CD8-positive, alpha-beta T cell (primary cell): ENCODE measurements at regions of chr15 and their contacts with region 1.

Region 1: DNA sequence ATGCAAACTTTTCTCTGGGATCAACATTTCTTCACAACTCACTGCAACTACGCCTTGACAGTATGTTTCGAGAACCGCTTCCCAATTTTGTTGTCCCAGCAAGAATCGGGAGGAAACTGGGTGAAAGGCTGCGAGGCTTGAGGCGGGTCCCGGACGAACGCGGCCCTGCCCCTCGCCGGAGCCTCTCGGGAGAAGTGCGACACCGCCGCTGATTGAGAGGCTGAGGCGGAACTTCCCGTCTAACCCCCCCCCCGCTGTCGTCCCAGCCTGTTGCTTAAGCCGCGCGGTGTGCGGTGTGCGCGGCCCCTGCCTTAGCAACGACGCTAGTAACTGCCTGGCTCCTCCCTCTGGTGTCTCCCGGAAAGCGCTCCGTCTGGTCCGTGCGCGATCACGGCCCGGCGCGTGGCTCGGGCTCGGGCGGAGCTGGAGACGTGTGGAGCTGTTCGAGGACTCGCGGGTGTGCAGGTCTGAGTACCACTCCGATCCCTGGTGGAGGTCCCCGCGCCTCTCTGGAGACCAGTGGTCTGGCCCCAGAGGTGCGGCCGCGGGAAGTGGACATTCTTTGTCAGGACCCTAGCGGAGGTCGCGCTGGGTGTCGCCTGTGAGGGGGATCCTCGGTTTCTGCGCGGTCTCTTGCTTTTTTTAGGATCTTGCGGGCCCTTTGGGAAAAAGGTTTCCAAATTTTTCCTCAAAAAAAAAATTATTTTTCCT is at the starts of genes DTWD1 and FAM227B:
- DNase-seq: peak; percentile 85 to 98 (median 93)
- ATAC-seq: peak; percentile 97
- H3K4me3 ChIP-seq: peak within 1 kb of the TSS; percentile 71 to 83
- H3K4me3 Mint-ChIP-seq: peak within 1 kb of the TSS; percentile 94
- H3K27ac ChIP-seq: peak within 1 kb of the TSS; percentile 86 to 89
- H3K27ac Mint-ChIP-seq: peak within 1 kb of the TSS; percentile 99
- H3K4me1 ChIP-seq: peaks cover 28% of the 10 kb centered on the region
- H3K4me1 Mint-ChIP-seq: peaks cover 54% of the 10 kb centered on the region
- H3K27me3 ChIP-seq: no peaks in the 10 kb centered on the region
- H3K27me3 Mint-ChIP-seq: no peaks in the 10 kb centered on the region
- CTCF ChIP-seq: no peak
- total RNA-seq, gene DTWD1: 8.7 to 9.7 TPM
- total RNA-seq, gene FAM227B: 3.3 to 4.3 TPM

Region 2: GRCh38 chr15:48330855-48331795 is 1289.7 kb before region 1 on chr15 and contains the start of gene DUT:
- CTCF ChIA-PET with region 1: no interaction called
- POLR2A ChIA-PET with region 1: no interaction called
- intact Hi-C with region 1: loop called (anchors 2 to 5 kb)
- DNase-seq: peak; percentile 64 to 89 (median 79)
- ATAC-seq: peak; percentile 83
- H3K4me3 ChIP-seq: peak within 1 kb of the TSS; percentile 65 to 74
- H3K4me3 Mint-ChIP-seq: peak within 1 kb of the TSS; percentile 99
- H3K27ac ChIP-seq: peak within 1 kb of the TSS; percentile 84 to 90
- H3K27ac Mint-ChIP-seq: peak within 1 kb of the TSS; percentile 99
- H3K4me1 ChIP-seq: peaks cover 11% of the 10 kb centered on the region
- H3K4me1 Mint-ChIP-seq: peaks cover 22% of the 10 kb centered on the region
- H3K27me3 ChIP-seq: no peaks in the 10 kb centered on the region
- H3K27me3 Mint-ChIP-seq: no peaks in the 10 kb centered on the region
- CTCF ChIP-seq: no peak
- total RNA-seq, gene DUT: 40.6 to 47.3 TPM

Region 3: GRCh38 chr15:48810414-48811317 is 810.1 kb before region 1 on chr15 and contains the start of gene CEP152:
- CTCF ChIA-PET with region 1: no interaction called
- POLR2A ChIA-PET with region 1: interaction called, 3 read pairs
- intact Hi-C with region 1: loop called (anchors 1 kb)
- DNase-seq: peak; percentile 96 to 100 (median 98)
- ATAC-seq: peak; percentile 94
- H3K4me3 ChIP-seq: peak within 1 kb of the TSS; percentile 83 to 95
- H3K4me3 Mint-ChIP-seq: peak within 1 kb of the TSS; percentile 90
- H3K27ac ChIP-seq: peak within 1 kb of the TSS; percentile 64 to 73
- H3K27ac Mint-ChIP-seq: peak within 1 kb of the TSS; percentile 71
- H3K4me1 ChIP-seq: peaks cover 13% of the 10 kb centered on the region
- H3K4me1 Mint-ChIP-seq: peaks cover 33% of the 10 kb centered on the region
- H3K27me3 ChIP-seq: no peaks in the 10 kb centered on the region
- H3K27me3 Mint-ChIP-seq: peaks cover 6% of the 10 kb centered on the region
- CTCF ChIP-seq: no peak
- total RNA-seq, gene CEP152: 3.9 to 5.1 TPM

Region 4: DNA sequence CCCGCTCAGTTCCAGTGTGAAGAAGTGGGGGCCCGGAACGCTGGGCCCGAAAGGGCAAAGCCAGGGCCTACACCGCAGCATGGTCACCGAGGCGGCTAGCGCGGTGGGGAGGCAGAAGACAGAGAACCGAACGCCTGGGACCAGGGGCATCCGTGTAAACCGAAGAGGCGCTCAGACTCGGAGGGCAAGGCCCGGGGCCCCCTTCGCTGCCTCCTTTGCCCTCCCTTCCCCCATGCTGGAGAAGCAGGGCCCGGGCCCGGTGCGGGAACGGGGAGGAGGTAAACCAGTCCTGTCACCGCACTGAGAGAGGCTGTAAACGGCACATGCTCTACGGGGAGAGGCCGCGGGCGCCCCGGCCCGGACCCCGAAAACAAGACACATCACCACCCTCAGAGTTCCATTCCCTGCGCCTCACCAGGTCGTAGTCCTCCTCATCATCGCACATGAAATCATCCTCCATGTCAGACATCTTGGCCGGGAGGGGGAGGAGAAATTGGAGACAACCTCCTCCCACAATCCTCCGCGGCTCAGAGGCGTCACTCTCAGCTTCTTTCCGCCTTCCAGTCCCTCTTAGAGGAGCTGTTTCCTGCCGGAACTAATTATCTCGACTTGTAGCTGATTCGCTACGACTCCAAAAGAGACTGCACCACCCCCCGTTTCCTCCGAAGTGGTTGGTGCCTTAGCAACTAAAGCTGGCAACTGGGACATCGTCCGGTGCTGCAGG is 465.5 kb before region 1 on chr15 and contains the start of gene COPS2:
- CTCF ChIA-PET with region 1: no interaction called
- POLR2A ChIA-PET with region 1: interaction called, 10 read pairs
- intact Hi-C with region 1: loop called in 1 of 2 experiments (anchors 1 kb)
- DNase-seq: peak; percentile 84 to 98 (median 93)
- ATAC-seq: peak; percentile 94
- H3K4me3 ChIP-seq: peak within 1 kb of the TSS; percentile 83 to 90
- H3K4me3 Mint-ChIP-seq: peak within 1 kb of the TSS; percentile 99
- H3K27ac ChIP-seq: peak within 1 kb of the TSS; percentile 83 to 92
- H3K27ac Mint-ChIP-seq: peak within 1 kb of the TSS; percentile 98
- H3K4me1 ChIP-seq: peaks cover 36% of the 10 kb centered on the region
- H3K4me1 Mint-ChIP-seq: peaks cover 55% of the 10 kb centered on the region
- H3K27me3 ChIP-seq: no peaks in the 10 kb centered on the region
- H3K27me3 Mint-ChIP-seq: no peaks in the 10 kb centered on the region
- CTCF ChIP-seq: no peak
- total RNA-seq, gene COPS2: 147 to 159 TPM

Region 5: DNA sequence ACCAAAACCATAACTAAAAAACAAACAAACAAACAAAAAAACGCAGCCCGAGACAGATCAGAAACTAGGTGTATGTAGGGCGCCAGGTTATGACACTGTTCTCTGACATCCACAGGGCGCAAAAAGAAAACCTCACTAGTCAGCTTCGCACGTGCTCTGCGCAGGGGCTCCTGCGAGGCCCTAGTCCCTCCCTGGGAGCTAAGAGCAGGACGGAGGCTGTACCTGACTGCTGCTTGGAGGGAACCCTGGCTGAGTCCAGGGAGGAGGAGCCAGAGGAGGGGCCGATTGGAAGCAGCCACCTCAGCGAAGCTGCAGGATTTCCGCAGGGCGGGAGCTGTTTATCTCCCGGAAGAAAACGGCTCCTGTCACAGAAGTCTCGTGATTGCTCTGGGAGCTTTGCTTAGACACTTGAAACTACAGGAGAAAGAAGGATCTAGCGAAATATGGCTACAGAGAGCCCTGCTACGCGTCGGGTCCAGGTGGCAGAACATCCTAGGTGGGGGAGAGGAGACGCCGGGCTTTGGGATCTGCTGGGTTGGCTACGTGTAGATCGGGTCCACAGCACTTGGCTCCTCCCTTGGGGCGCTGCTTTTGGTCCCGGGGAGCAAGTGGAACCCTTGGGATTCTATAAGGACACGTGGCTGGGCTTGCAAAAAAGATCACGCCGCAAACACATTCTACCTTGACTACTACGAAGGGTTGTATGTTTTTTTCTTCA is 450.8 kb before region 1 on chr15 and contains the start of gene GALK2:
- CTCF ChIA-PET with region 1: no interaction called
- POLR2A ChIA-PET with region 1: interaction called, 4 read pairs
- intact Hi-C with region 1: loop called in 1 of 2 experiments (anchors 5 kb)
- DNase-seq: peak; percentile 58 to 91 (median 81)
- ATAC-seq: peak; percentile 99
- H3K4me3 ChIP-seq: peak within 1 kb of the TSS; percentile 67 to 75
- H3K4me3 Mint-ChIP-seq: peak within 1 kb of the TSS; percentile 96
- H3K27ac ChIP-seq: peak within 1 kb of the TSS; percentile 74 to 88
- H3K27ac Mint-ChIP-seq: peak within 1 kb of the TSS; percentile 98
- H3K4me1 ChIP-seq: peaks cover 11% of the 10 kb centered on the region
- H3K4me1 Mint-ChIP-seq: peaks cover 43% of the 10 kb centered on the region
- H3K27me3 ChIP-seq: no peaks in the 10 kb centered on the region
- H3K27me3 Mint-ChIP-seq: no peaks in the 10 kb centered on the region
- CTCF ChIP-seq: no peak
- total RNA-seq, gene GALK2: 7.7 to 10.7 TPM

Region 6: DNA sequence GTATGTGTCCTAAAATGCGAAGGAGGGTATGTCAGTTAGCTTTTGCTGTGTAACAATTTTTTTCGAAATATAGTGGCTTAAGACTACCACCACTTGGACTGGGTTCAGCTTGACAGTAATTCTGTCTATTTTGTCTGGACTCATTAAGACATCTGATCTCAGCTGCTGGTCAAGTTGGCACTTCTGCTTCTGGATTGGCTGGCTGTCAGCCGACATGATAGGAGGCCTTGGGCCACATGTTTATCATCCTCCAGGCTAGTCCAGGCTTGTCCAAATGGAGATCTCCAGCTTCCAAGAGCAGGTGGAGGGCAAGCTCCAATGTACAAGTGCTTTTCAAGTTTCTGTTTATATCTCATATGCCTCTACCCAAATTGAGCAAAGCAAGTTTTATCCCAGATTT is 354.9 kb before region 1 on chr15:
- CTCF ChIA-PET with region 1: no interaction called
- POLR2A ChIA-PET with region 1: no interaction called
- intact Hi-C with region 1: no loop called
- DNase-seq: no peak
- ATAC-seq: no peak
- H3K4me3 ChIP-seq: no peak overlapping the region
- H3K4me3 Mint-ChIP-seq: no peak overlapping the region
- H3K27ac ChIP-seq: no peak overlapping the region
- H3K27ac Mint-ChIP-seq: no peak overlapping the region
- H3K4me1 ChIP-seq: no peaks in the 10 kb centered on the region
- H3K4me1 Mint-ChIP-seq: no peaks in the 10 kb centered on the region
- H3K27me3 ChIP-seq: no peaks in the 10 kb centered on the region
- H3K27me3 Mint-ChIP-seq: no peaks in the 10 kb centered on the region
- CTCF ChIP-seq: no peak

Region 7: GRCh38 chr15:49428409-49429095 is 192.3 kb before region 1 on chr15:
- CTCF ChIA-PET with region 1: no interaction called
- POLR2A ChIA-PET with region 1: no interaction called
- intact Hi-C with region 1: no loop called
- DNase-seq: no peak
- ATAC-seq: no peak
- H3K4me3 ChIP-seq: no peak overlapping the region
- H3K4me3 Mint-ChIP-seq: no peak overlapping the region
- H3K27ac ChIP-seq: no peak overlapping the region
- H3K27ac Mint-ChIP-seq: no peak overlapping the region
- H3K4me1 ChIP-seq: no peaks in the 10 kb centered on the region
- H3K4me1 Mint-ChIP-seq: no peaks in the 10 kb centered on the region
- H3K27me3 ChIP-seq: no peaks in the 10 kb centered on the region
- H3K27me3 Mint-ChIP-seq: no peaks in the 10 kb centered on the region
- CTCF ChIP-seq: no peak

Region 8: DNA sequence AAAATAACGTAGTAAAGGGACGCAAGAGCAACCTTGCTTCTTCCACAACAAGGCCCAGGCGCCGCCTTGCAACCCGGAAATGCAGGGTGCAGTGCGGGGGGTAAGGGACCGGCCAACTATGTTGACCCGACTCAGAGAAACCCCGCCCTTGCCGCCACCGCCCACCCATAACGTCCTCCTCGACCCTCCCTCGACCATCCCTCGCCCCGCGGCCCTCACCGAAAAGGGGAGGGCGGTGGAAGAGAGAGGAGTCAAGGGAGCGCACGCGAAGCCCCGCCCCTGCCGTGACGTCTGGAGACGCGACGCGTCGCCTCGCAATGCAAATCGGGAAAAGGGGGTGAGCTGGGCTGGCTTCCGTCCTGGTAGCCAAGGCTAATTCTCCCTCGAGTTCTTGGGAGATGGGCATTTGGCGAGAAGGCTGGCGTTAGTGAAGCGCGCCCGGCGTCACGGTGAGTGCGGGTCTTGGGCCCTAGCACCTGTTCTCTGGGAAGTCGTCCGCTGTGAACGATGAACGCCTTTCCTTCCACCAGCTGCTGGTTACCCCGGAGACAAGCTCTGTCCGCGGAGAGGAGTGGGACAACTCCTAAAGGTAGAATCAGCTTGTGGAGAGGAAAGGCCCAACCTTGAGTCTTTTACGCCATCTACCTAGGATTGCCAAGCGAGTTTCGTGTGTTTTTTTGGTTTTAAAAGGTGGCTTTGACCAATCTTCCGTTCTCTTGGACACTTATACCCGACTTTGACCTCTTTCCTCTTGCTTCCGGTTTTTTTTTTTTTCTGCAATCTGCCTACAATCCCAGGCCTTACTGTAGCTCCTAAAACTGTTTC is 803.5 kb after region 1 on chr15 and contains the start of gene USP8:
- CTCF ChIA-PET with region 1: no interaction called
- POLR2A ChIA-PET with region 1: no interaction called
- intact Hi-C with region 1: loop called (anchors 2 to 5 kb)
- DNase-seq: peak; percentile 86 to 97 (median 92)
- ATAC-seq: peak; percentile 96
- H3K4me3 ChIP-seq: peak within 1 kb of the TSS; percentile 84 to 95
- H3K4me3 Mint-ChIP-seq: peak within 1 kb of the TSS; percentile 98
- H3K27ac ChIP-seq: peak within 1 kb of the TSS; percentile 91 to 96
- H3K27ac Mint-ChIP-seq: peak within 1 kb of the TSS; percentile 99
- H3K4me1 ChIP-seq: peaks cover 27% of the 10 kb centered on the region
- H3K4me1 Mint-ChIP-seq: peaks cover 42% of the 10 kb centered on the region
- H3K27me3 ChIP-seq: no peaks in the 10 kb centered on the region
- H3K27me3 Mint-ChIP-seq: no peaks in the 10 kb centered on the region
- CTCF ChIP-seq: no peak
- total RNA-seq, gene USP8: 59.5 to 61.5 TPM